Activated CD4-positive, alpha-beta T cell treated with anti-CD3 and anti-CD28 coated beads, Interleukin-2, amount 10 ng/mL, durations not matched to agents 24 days and 14 days (primary cell): ENCODE measurements at regions of chr17 and their contacts with region 1.

Region 1: GRCh38 chr17:27473748-27474609 is 17.7 kb downstream of the KSR1 start:
- DNase-seq: peak; percentile 93
- H3K4me3 Mint-ChIP-seq: peak overlapping the region; percentile 61
- H3K27ac Mint-ChIP-seq: peak overlapping the region; percentile 95
- H3K4me1 Mint-ChIP-seq: peaks cover 85% of the 10 kb centered on the region
- H3K27me3 Mint-ChIP-seq: peaks cover 1% of the 10 kb centered on the region

Region 2: DNA sequence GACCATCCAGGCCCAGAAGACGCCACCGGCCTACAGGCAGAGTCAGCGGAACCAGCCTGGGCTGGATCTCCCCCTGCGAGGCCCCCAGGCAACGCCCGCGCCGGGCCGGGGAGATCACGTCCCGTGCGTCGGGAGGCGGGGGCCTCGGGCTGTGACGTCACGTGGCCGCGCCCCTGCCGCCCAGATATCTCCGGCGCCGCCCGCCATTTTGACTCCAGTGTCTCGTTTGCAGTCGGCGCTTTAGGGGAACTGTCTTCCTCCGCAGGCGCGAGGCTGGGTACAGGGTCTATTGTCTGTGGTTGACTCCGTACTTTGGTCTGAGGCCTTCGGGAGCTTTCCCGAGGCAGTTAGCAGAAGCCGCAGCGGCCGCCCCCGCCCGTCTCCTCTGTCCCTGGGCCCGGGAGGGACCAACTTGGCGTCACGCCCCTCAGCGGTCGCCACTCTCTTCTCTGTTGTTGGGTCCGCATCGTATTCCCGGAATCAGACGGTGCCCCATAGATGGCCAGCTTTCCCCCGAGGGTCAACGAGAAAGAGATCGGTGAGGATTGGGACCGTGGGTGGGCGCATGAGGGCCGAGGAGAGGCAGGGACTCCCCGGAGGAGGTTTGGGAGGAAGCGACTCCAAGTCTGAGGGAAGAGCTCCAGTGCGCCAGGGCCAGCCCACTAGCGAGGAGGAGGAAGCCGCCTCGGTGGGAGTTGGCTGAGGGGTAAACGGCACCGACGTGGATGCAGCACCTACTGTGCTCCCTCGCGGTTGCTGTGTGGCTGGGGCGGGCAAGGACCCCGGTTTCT is 179.9 kb before region 1 on chr17 and contains the start of gene WSB1:
- intact Hi-C with region 1: loop called (anchors 2 kb)
- DNase-seq: peak; percentile 98
- H3K4me3 Mint-ChIP-seq: peak within 1 kb of the TSS; percentile 98
- H3K27ac Mint-ChIP-seq: peak within 1 kb of the TSS; percentile 100
- H3K4me1 Mint-ChIP-seq: peaks cover 30% of the 10 kb centered on the region
- H3K27me3 Mint-ChIP-seq: no peaks in the 10 kb centered on the region
- total RNA-seq, gene WSB1: 135 and 136 TPM in 2 replicates

Region 3: GRCh38 chr17:27353461-27354050 is 120.4 kb before region 1 on chr17:
- intact Hi-C with region 1: loop called (anchors 5 kb)
- DNase-seq: peak; percentile 96
- H3K4me3 Mint-ChIP-seq: peak overlapping the region; percentile 91
- H3K27ac Mint-ChIP-seq: peak overlapping the region; percentile 95
- H3K4me1 Mint-ChIP-seq: peaks cover 26% of the 10 kb centered on the region
- H3K27me3 Mint-ChIP-seq: no peaks in the 10 kb centered on the region

Region 4: DNA sequence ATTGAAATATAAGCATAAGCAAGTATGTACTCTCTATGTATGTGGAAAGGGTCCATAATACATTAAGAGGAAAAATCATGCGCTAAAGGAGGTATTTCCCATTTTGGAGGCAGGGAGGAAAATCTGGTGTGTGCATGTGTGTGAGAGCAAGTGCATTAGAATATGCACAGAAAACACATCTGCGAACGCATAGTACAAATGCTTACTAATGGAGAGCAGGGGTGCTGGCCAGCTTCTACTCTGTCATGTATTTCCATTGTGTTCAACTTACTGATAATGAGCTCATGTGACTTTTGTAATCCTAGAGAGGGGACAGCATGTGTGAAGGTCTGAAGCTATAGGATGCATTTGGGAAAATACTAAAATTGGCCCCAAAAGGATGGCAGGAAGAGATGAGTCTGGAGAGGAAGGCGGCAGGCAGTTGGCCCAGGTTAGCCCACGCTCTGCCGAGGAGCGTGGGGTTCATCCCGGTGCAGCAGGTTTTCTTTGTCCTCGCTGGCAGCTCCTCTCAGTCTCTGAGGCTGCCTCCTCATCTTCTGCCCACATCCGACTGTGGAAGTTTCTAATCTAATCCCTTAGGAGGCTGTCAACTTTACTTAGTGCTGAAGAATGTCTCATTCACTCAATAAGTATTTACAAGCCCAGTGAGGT is 35.5 kb before region 1 on chr17:
- intact Hi-C with region 1: no loop called
- DNase-seq: no peak
- H3K4me3 Mint-ChIP-seq: no peak overlapping the region
- H3K27ac Mint-ChIP-seq: no peak overlapping the region
- H3K4me1 Mint-ChIP-seq: peaks cover 6% of the 10 kb centered on the region
- H3K27me3 Mint-ChIP-seq: no peaks in the 10 kb centered on the region

Region 5: GRCh38 chr17:27455914-27456680 is 17.9 kb before region 1 on chr17 and contains the start of gene KSR1:
- intact Hi-C with region 1: loop called (anchors 1 kb)
- DNase-seq: peak; percentile 95
- H3K4me3 Mint-ChIP-seq: peak within 1 kb of the TSS; percentile 98
- H3K27ac Mint-ChIP-seq: peak within 1 kb of the TSS; percentile 77
- H3K4me1 Mint-ChIP-seq: peaks cover 42% of the 10 kb centered on the region
- H3K27me3 Mint-ChIP-seq: no peaks in the 10 kb centered on the region
- total RNA-seq, gene KSR1: 104 TPM in 2 replicates

Region 6: GRCh38 chr17:27544350-27545131 is 70.6 kb after region 1 on chr17:
- intact Hi-C with region 1: loop called (anchors 1 kb)
- DNase-seq: peak; percentile 91
- H3K4me3 Mint-ChIP-seq: peak overlapping the region; percentile 58
- H3K27ac Mint-ChIP-seq: peak overlapping the region; percentile 87
- H3K4me1 Mint-ChIP-seq: peaks cover 77% of the 10 kb centered on the region
- H3K27me3 Mint-ChIP-seq: peaks cover 3% of the 10 kb centered on the region

Region 7: GRCh38 chr17:27578718-27579085 is 104.7 kb after region 1 on chr17:
- intact Hi-C with region 1: loop called (anchors 1 kb)
- DNase-seq: peak; percentile 86
- H3K4me3 Mint-ChIP-seq: peak overlapping the region; percentile 40
- H3K27ac Mint-ChIP-seq: peak overlapping the region; percentile 86
- H3K4me1 Mint-ChIP-seq: peaks cover 72% of the 10 kb centered on the region
- H3K27me3 Mint-ChIP-seq: no peaks in the 10 kb centered on the region

Region 8: DNA sequence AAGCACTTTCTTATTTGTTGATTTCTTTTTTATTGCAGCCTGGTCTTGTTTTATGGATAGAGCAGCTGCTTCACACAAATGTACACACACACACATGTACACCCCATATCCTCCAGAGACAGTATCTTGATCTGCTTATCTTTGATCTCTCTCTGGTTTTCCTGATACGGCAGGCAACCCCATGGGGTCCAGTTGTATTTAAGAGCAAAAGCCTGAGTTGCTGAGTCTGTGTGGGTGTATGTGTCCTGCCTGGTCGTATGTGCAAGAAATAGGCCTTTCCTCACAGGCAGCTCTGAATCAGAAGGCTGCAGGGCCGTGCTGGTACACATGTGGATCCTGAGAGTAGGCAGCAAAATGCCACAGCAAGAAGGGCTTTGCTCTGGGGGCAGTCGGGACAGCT is 142.4 kb after region 1 on chr17:
- intact Hi-C with region 1: loop called (anchors 2 kb)
- DNase-seq: peak; percentile 65
- H3K4me3 Mint-ChIP-seq: peak overlapping the region; percentile 52
- H3K27ac Mint-ChIP-seq: peak overlapping the region; percentile 79
- H3K4me1 Mint-ChIP-seq: peaks cover 51% of the 10 kb centered on the region
- H3K27me3 Mint-ChIP-seq: no peaks in the 10 kb centered on the region